ENCODE measurements at regions of chr11 and their contacts with region 1.

Region 1: GRCh38 chr11:14320020-14320419 is 39.0 kb downstream of the RRAS2 start:
- DNase-seq: no peak
- ATAC-seq: no peak
- H3K4me3 Mint-ChIP-seq: peak overlapping the region; percentile 65
- H3K27ac Mint-ChIP-seq: peak overlapping the region; percentile 83
- H3K4me1 Mint-ChIP-seq: peaks cover 93% of the 10 kb centered on the region
- H3K27me3 Mint-ChIP-seq: no peaks in the 10 kb centered on the region
- CTCF ChIP-seq: no peak

Region 2: GRCh38 chr11:13535819-13536218 is 784.2 kb before region 1 on chr11:
- CTCF ChIA-PET with region 1: no interaction called
- POLR2A ChIA-PET with region 1: no interaction called
- intact Hi-C with region 1: no loop called
- DNase-seq: no peak
- ATAC-seq: no peak
- H3K4me3 Mint-ChIP-seq: no peak overlapping the region
- H3K27ac Mint-ChIP-seq: no peak overlapping the region
- H3K4me1 Mint-ChIP-seq: no peaks in the 10 kb centered on the region
- H3K27me3 Mint-ChIP-seq: peaks cover 2% of the 10 kb centered on the region
- CTCF ChIP-seq: no peak

Region 3: DNA sequence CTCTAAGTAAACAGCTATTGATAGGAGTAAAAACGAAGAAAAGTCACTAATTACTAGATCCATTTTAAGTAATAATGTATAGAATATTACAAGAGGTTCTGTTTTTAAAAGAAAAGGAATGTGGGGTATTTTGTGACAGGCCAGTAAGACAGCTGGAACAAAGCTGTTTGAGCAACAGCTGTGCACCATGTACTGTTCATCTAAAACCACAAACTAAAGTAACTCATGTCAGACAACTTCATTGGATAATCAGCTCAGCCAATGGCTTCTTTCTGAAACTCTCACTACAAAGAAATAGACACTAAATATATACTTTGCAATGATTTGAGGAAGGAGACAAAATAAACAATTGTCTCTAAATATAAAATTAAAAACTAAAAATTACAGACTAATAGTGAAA is 22.9 kb after region 1 on chr11:
- CTCF ChIA-PET with region 1: interaction called, 3 read pairs
- POLR2A ChIA-PET with region 1: interaction called, 7 read pairs
- intact Hi-C with region 1: loop called (anchors 2 kb)
- DNase-seq: no peak
- ATAC-seq: peak; percentile 32
- H3K4me3 Mint-ChIP-seq: no peak overlapping the region
- H3K27ac Mint-ChIP-seq: no peak overlapping the region
- H3K4me1 Mint-ChIP-seq: peaks cover 75% of the 10 kb centered on the region
- H3K27me3 Mint-ChIP-seq: no peaks in the 10 kb centered on the region
- CTCF ChIP-seq: no peak

Region 4: DNA sequence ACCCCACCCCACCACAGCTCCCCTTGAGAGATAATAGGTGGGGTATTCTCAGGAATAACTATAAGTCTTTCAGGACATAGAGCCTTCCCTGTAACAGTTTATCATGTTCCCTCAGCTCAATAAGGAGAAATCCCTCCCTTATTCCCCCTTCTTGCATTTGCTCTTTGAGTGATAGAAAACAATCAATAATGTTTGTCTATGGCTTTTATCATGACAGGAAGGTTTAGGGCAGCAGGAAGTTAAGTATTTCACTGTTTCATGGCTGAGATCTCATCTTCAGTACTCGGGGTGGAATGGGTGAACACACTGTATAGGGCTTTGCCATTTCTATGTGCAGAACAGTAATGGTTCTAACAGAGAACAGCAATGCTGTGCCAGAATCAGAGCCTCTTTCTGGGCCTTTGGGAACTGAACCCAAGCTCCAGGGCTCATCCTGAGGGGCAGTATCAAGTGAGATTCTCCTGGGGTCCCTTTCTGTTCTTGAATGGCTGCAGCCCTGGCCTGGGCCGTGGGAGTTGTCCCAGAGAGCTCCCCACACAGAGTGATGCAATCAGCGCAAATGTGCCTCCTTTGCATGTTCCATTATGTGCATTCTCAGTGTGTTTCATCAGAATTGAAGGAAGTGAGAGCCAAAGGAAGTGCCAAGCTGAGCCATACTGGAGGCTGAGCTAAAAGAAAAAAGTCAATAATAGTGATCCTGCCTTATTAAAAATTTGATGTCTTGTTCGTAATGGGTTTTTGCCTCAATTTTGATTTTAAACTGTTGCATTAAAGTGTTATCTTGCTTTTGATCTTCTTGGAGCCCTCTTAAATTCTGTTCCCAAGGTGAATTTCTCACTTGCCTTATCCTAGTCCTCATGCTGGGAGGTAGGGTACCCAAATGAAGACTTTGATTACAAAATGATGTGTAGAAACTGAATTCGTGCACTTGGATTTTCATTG is 574.9 kb after region 1 on chr11:
- CTCF ChIA-PET with region 1: no interaction called
- POLR2A ChIA-PET with region 1: no interaction called
- intact Hi-C with region 1: no loop called
- DNase-seq: no peak
- ATAC-seq: no peak
- H3K4me3 Mint-ChIP-seq: no peak overlapping the region
- H3K27ac Mint-ChIP-seq: no peak overlapping the region
- H3K4me1 Mint-ChIP-seq: peaks cover 19% of the 10 kb centered on the region
- H3K27me3 Mint-ChIP-seq: peaks cover 2% of the 10 kb centered on the region
- CTCF ChIP-seq: no peak